K562 (cell line): ENCODE measurements at regions of chr1 and their contacts with region 1.

Region 1: GRCh38 chr1:51768971-51769588 is 109.4 kb downstream of the NRDC start:
- DNase-seq: peak; percentile 62 to 73 (median 64)
- ATAC-seq: peak; percentile 93
- H3K4me3 ChIP-seq: no peak overlapping the region
- H3K27ac ChIP-seq: no peak overlapping the region
- H3K4me1 ChIP-seq: no peaks in the 10 kb centered on the region; a peak in 1 of 5 replicates
- H3K27me3 ChIP-seq: no peaks in the 10 kb centered on the region
- CTCF ChIP-seq: peak; percentile 68 to 88 (median 85)
- EP300 ChIP-seq: no peak
- POLR2A ChIP-seq: no peak
- RAD21 ChIP-seq: peak; percentile 91 to 96

Region 2: DNA sequence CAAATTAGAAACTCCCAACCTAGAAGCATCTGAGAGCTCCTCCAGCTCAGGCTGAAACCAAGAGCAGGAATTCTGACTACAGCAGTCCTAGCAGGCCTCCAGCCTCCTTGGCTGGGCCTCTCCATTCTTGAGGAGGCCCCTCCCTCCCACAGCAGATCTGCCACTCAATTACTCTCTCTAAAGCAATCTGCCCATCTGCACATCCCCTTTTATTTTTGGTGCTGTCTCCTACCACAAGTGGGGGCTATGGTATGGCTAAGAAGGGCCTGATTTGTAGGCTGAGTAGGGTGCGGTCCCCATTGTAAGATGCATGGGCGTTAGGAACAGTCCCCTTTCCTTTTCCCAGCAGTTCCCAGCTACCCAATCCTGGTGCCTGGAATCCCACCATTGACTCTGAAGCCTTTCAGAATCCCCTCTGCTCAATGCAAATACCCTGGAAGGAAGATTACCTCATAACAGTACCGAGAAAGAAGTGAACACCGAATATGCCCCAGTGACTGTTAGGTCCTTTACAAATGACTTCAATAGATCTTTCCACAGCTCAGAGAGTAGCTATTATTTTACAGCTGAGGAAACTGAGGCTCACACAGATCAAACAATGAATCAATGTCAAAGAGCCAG is 427.1 kb before region 1 on chr1:
- CTCF ChIA-PET with region 1: interaction called, 4 read pairs
- POLR2A ChIA-PET with region 1: no interaction called
- in situ Hi-C with region 1: no loop called
- intact Hi-C with region 1: loop called (anchors 10 kb)
- DNase-seq: peak; percentile 48 to 68 (median 58)
- ATAC-seq: peak; percentile 82
- H3K4me3 ChIP-seq: no peak overlapping the region
- H3K27ac ChIP-seq: no peak overlapping the region
- H3K4me1 ChIP-seq: peaks cover 0 to 17% of the 10 kb centered on the region in 2 experiments; a peak in 2 of 5 replicates
- H3K27me3 ChIP-seq: peaks cover 0 to 8% of the 10 kb centered on the region in 2 experiments; a peak in 3 of 5 replicates
- CTCF ChIP-seq: peak; percentile 72 to 76 (median 74)
- EP300 ChIP-seq: no peak
- POLR2A ChIP-seq: no peak
- RAD21 ChIP-seq: peak; percentile 46 to 80

Region 3: GRCh38 chr1:51445351-51446090 is 323.6 kb before region 1 on chr1:
- CTCF ChIA-PET with region 1: no interaction called
- POLR2A ChIA-PET with region 1: no interaction called
- in situ Hi-C with region 1: no loop called
- intact Hi-C with region 1: loop called (anchors 10 kb)
- DNase-seq: no peak
- ATAC-seq: no peak; the same call in 1 of the 3 replicates
- H3K4me3 ChIP-seq: no peak overlapping the region
- H3K27ac ChIP-seq: no peak overlapping the region; the same call in 2 of the 3 replicates
- H3K4me1 ChIP-seq: peaks cover 0 to 16% of the 10 kb centered on the region in 2 experiments; a peak in 4 of 5 replicates
- H3K27me3 ChIP-seq: no peaks in the 10 kb centered on the region
- CTCF ChIP-seq: no peak
- EP300 ChIP-seq: no peak
- POLR2A ChIP-seq: no peak
- RAD21 ChIP-seq: no peak

Region 4: GRCh38 chr1:51569284-51570062 is 199.6 kb before region 1 on chr1:
- CTCF ChIA-PET with region 1: interaction called, 9 read pairs
- POLR2A ChIA-PET with region 1: no interaction called
- in situ Hi-C with region 1: no loop called
- intact Hi-C with region 1: loop called (anchors 2 kb)
- DNase-seq: peak; percentile 44 to 75 (median 50)
- ATAC-seq: peak; percentile 80
- H3K4me3 ChIP-seq: no peak overlapping the region
- H3K27ac ChIP-seq: peak overlapping the region; percentile 20; the same call in 1 of the 3 replicates
- H3K4me1 ChIP-seq: peaks cover 4 to 35% of the 10 kb centered on the region in 2 experiments; a peak in 4 of 5 replicates
- H3K27me3 ChIP-seq: no peaks in the 10 kb centered on the region
- CTCF ChIP-seq: peak; percentile 30 to 58 (median 31); a peak in 5 of 6 replicates
- EP300 ChIP-seq: peak; percentile 56
- POLR2A ChIP-seq: no peak
- RAD21 ChIP-seq: peak; percentile 59 to 72

Region 5: GRCh38 chr1:51627678-51628077 is 141.4 kb before region 1 on chr1:
- CTCF ChIA-PET with region 1: interaction called, 15 read pairs
- POLR2A ChIA-PET with region 1: interaction called, 3 read pairs
- in situ Hi-C with region 1: loop called (anchors 5 kb)
- intact Hi-C with region 1: loop called (anchors 1 kb)
- DNase-seq: peak in 2 of 4 experiments; percentile 63 to 80
- ATAC-seq: peak; percentile 71
- H3K4me3 ChIP-seq: no peak overlapping the region
- H3K27ac ChIP-seq: no peak overlapping the region
- H3K4me1 ChIP-seq: peaks cover 21 to 35% of the 10 kb centered on the region in 2 experiments
- H3K27me3 ChIP-seq: no peaks in the 10 kb centered on the region
- CTCF ChIP-seq: peak; percentile 65 to 83 (median 72)
- EP300 ChIP-seq: no peak
- POLR2A ChIP-seq: no peak
- RAD21 ChIP-seq: peak; percentile 70 to 91

Region 6: DNA sequence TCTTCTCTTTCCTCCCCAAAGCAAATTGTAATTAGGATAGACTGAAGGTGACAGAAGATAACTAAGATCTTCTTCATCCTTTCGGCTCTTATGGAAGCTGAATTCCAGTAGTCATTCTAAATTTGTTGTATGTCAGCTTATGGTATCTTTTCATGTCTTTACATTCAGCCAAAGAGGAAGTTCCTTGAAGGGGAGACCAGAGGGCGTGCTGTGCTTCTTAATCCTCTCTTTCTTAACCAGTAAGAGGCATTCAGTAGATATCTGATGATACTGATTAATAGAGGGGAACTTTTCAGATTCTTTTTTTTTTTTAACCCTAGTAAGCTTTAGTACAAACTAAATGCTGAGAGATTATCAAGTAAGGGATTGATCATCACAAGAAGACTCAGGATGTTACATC is 49.9 kb before region 1 on chr1:
- CTCF ChIA-PET with region 1: interaction called, 4 read pairs
- POLR2A ChIA-PET with region 1: no interaction called
- in situ Hi-C with region 1: no loop called
- intact Hi-C with region 1: loop called (anchors 1 kb)
- DNase-seq: no peak
- ATAC-seq: peak; percentile 70; the same call in 2 of the 3 replicates
- H3K4me3 ChIP-seq: no peak overlapping the region
- H3K27ac ChIP-seq: no peak overlapping the region
- H3K4me1 ChIP-seq: no peaks in the 10 kb centered on the region
- H3K27me3 ChIP-seq: no peaks in the 10 kb centered on the region
- CTCF ChIP-seq: peak in 1 of 3 experiments; percentile 51; a peak in 2 of 6 replicates
- EP300 ChIP-seq: no peak
- POLR2A ChIP-seq: no peak
- RAD21 ChIP-seq: peak; percentile 14 to 50; a peak in 2 of 4 replicates

Region 7: GRCh38 chr1:51729156-51729823 is 39.8 kb before region 1 on chr1:
- CTCF ChIA-PET with region 1: no interaction called
- POLR2A ChIA-PET with region 1: no interaction called
- in situ Hi-C with region 1: no loop called
- intact Hi-C with region 1: loop called (anchors 5 kb)
- DNase-seq: peak; percentile 99 to 100 (median 100)
- ATAC-seq: peak; percentile 84
- H3K4me3 ChIP-seq: peak overlapping the region; percentile 73
- H3K27ac ChIP-seq: peak overlapping the region; percentile 88
- H3K4me1 ChIP-seq: peaks cover 28 to 34% of the 10 kb centered on the region in 2 experiments
- H3K27me3 ChIP-seq: no peaks in the 10 kb centered on the region
- CTCF ChIP-seq: no peak
- EP300 ChIP-seq: peak; percentile 32; the same call in 1 of the 2 replicates
- POLR2A ChIP-seq: peak; percentile 94
- RAD21 ChIP-seq: 0 out of 4 replicates have a peak, but pooled peaks of 1 of the 2 experiments have one; percentile 10